ENCODE measurements at regions of chr19 and their contacts with region 1.

Region 1: DNA sequence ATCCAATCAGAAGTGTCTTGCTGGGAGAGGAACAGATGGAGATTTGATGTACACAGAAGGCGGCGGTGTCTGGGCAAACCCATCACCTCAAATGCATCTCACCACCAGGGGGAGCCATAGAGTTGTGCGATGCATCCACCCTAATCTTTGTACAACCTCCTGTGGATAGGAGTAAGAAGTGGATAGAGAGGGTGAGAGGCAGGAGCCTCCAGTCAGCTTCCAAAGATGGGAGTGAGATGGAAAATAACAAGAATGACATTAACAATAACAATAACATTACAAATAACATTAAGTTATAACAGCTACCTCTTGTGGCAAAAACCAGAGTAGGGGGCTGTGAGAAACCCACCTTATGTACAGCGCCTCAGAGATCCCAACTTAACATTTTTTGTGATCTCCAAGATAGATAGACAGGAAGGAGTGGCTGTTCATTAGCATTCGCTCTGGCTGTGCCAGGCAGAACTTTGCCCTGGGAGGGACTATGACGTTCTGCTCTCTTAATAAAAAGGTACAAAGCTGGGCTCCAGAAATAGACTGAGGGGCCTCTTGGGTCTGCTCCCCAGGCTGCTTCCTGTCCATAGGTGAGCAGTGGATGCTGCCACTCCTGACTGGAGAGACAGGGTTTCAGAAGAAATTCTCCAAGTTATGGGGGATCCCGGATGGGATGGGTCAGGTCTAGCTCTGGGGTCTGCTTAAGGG is 5.2 kb upstream of the CEACAM18 start:
- DNase-seq: peak; percentile 79
- H3K4me3 ChIP-seq: no peak overlapping the region
- H3K27ac ChIP-seq: no peak overlapping the region
- H3K4me1 ChIP-seq: no peaks in the 10 kb centered on the region
- H3K27me3 ChIP-seq: peaks cover 0 to 20% (median under 1%) of the 10 kb centered on the region in 3 donors
- CTCF ChIP-seq: peak; percentile 44 to 80 (median 71)
- EP300 ChIP-seq: no peak
- POLR2A ChIP-seq: no peak

Region 2: DNA sequence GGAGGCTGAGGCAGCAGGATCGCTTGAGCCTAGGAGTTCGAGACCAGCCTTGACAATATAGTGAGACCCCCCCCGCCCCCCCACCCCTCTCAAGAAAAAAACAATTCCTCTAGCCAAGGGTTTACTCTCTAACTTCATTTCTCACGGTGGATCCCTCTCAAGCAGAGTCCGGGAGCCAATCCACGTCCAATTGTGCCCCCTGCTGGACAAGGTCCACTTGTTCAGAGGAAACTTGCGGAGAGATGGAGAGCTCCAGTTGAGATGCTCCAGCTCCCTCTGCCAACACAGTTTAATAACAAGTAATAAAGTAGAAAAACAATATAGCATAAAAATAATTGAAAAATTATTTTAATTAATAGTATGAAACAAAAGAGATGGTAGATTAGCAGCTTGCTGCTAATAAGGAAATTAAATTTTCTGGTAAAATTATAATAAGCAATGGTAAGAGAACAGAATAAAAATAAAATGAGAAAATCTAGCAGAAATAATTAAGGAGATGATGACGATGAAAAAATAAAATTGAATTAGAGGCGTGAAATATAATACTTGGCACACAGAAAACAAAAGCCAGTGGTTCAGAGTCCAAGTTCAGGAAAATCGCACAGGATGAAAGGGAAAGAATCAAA is 187.9 kb after region 1 on chr19:
- intact Hi-C with region 1: loop called (anchors 1 kb)
- DNase-seq: no peak
- H3K4me3 ChIP-seq: no peak overlapping the region
- H3K27ac ChIP-seq: no peak overlapping the region
- H3K4me1 ChIP-seq: peaks cover 0 to 4% (median 0%) of the 10 kb centered on the region in 4 donors
- H3K27me3 ChIP-seq: peaks cover 0 to 36% (median 12%) of the 10 kb centered on the region in 3 donors
- CTCF ChIP-seq: peak in 3 of 4 experiments; percentile 24 to 49 (median 45)
- EP300 ChIP-seq: no peak
- POLR2A ChIP-seq: no peak

Region 3: DNA sequence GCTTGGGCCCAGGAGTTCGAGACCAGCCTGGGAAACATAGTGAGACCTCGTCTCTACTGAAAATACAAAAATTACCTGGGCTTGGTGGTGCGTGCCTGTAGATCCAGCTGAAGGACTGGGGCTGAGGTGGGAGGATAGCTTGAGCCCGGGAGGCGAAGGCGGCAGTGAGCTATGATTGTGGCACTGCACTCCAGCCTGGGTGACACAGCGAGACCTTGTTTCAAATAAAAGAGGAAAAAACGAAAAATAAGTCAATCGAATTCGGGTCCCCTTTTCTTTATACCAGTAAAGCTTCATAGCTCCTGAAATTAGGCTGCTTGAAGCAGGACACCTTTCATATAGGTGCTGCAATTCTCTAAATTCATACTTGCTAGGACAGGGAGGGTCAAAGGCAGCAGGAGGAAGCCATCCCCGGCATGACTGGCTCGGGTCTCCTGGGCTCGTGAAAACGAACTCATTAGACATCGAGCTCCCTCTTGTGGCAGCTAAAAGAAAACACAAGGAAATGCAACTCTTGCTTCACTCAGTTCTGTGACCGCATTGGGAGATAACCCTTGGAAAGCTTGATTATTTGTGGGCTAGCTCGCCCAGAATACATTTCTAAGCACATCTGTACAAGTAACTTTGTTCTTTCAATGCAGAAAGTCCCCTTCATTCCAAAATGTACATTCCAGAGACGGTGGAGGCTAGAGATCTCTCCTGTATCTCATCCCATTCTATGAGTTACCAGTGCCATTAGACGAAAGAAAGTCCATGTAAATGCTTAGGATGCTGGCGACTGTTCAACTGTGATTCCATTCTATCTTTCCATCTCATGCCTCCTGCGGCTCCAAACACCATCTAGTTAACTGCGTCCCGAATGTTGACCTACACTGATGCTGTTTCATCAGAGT is 304.7 kb after region 1 on chr19:
- intact Hi-C with region 1: loop called (anchors 2 kb)
- DNase-seq: peak; percentile 87
- H3K4me3 ChIP-seq: no peak overlapping the region
- H3K27ac ChIP-seq: no peak overlapping the region
- H3K4me1 ChIP-seq: no peaks in the 10 kb centered on the region
- H3K27me3 ChIP-seq: peaks cover 0 to 11% (median 5%) of the 10 kb centered on the region in 3 donors
- CTCF ChIP-seq: peak; percentile 24 to 68 (median 58)
- EP300 ChIP-seq: no peak
- POLR2A ChIP-seq: no peak

Measured in sigmoid colon (tissue), 7 donors.